ENCODE measurements at regions of chr12 and their contacts with region 1.

Region 1: DNA sequence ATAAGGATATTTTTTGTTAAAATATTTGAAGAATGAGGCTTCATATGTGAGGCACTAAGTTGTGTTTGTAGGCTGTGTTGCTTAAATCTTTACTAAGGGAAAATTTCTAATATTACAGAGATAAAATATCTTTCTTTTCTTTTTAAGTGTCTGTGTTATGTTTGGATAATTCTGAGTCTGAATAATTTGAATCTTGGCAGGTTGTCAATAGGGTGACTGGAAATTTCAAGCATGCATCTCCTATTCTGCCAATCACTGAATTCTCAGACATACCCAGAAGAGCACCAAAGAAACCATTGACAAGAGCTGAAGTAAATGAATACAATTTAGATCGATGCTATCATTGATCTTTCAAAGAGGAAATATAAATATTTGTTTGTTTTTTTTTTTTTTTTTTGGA is 29.4 kb downstream of the TMPO start:
- H3K4me3 ChIP-seq: no peak overlapping the region
- H3K27ac ChIP-seq: no peak overlapping the region
- H3K4me1 ChIP-seq: no peaks in the 10 kb centered on the region
- CTCF ChIP-seq: no peak

Region 2: DNA sequence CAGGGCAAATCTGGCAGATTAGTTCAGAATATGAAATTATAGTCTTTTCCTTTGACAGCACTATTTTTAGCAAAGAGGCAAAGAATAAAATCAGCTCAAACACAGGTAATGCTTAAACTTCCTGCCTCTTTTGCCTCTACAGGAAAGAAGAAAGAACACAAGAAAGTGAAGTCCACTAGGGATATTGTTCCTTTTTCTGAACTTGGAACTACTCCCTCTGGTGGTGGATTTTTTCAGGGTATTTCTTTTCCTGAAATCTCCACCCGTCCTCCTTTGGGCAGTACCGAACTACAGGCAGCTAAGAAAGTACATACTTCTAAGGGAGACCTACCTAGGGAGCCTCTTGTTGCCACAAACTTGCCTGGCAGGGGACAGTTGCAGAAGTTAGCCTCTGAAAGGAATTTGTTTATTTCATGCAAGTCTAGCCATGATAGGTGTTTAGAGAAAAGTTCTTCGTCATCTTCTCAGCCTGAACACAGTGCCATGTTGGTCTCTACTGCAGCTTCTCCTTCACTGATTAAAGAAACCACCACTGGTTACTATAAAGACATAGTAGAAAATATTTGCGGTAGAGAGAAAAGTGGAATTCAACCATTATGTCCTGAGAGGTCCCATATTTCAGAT is 12.0 kb before region 1 on chr12:
- CTCF ChIA-PET with region 1: interaction called, 19 read pairs
- POLR2A ChIA-PET with region 1: interaction called, 3 read pairs
- H3K4me3 ChIP-seq: no peak overlapping the region
- H3K27ac ChIP-seq: no peak overlapping the region
- H3K4me1 ChIP-seq: peaks cover under 1% of the 10 kb centered on the region; the same call in 1 of the 2 replicates
- CTCF ChIP-seq: peak; percentile 38